ENCODE measurements at regions of chr11 and their contacts with region 1.

Region 1: GRCh38 chr11:8263769-8264410 is at the start of gene LMO1:
- DNase-seq: peak; percentile 84
- H3K4me3 Mint-ChIP-seq: peak within 1 kb of the TSS; percentile 26
- H3K27ac Mint-ChIP-seq: peak within 1 kb of the TSS; percentile 9
- H3K4me1 Mint-ChIP-seq: peaks cover 17% of the 10 kb centered on the region
- H3K27me3 Mint-ChIP-seq: peaks cover 100% of the 10 kb centered on the region

Region 2: GRCh38 chr11:8192016-8192895 is 71.6 kb before region 1 on chr11:
- CTCF ChIA-PET with region 1: interaction called, 18 read pairs
- DNase-seq: peak; percentile 58
- H3K4me3 Mint-ChIP-seq: no peak overlapping the region
- H3K27ac Mint-ChIP-seq: no peak overlapping the region
- H3K4me1 Mint-ChIP-seq: no peaks in the 10 kb centered on the region
- H3K27me3 Mint-ChIP-seq: peaks cover 26% of the 10 kb centered on the region

Region 3: GRCh38 chr11:8209208-8209807 is 54.6 kb before region 1 on chr11:
- CTCF ChIA-PET with region 1: no interaction called
- DNase-seq: peak; percentile 43
- H3K4me3 Mint-ChIP-seq: no peak overlapping the region
- H3K27ac Mint-ChIP-seq: no peak overlapping the region
- H3K4me1 Mint-ChIP-seq: no peaks in the 10 kb centered on the region
- H3K27me3 Mint-ChIP-seq: peaks cover 49% of the 10 kb centered on the region

Region 4: DNA sequence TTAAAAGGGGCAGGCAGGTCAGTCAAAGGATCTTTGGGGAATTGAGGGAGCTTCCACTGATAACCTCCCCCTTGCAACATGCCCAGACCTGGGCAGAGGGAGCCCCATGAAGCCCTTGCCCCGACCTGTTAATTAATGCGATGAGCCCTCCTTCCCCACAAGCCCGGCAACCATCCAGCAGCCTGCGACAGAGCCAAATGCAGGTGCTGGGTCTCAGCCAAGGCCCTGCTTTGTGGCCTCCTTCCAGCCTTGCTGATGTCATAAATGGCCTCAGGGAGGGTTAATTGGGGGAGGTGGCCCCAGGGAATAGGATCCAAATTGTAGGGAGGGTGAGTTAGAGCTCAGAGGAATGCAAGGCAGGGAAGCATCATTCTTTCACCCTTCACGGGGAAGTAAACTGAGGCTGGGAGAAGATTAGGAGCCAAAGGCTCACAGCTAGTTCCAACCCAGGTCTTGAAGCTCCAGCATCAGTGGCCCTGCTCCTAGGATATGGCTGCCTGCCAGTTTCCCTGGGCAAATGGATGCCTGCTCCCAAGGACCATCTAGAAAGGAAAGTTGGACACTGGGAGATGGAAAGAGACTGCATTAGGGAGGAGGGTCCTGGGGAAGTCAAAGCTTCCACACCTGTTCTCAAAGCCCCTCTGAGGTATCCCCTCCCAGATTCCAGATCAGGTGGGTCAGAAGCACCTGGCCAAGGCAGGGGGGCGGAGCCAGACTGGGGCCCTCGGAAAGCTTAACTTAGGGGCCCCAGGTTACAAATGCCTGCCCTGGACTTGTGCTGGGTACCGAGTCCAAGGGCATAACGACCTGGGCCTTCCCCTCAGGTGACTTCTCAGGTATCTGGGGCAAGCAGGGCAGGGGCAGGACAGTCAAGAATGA is 34.4 kb before region 1 on chr11:
- CTCF ChIA-PET with region 1: interaction called, 29 read pairs
- DNase-seq: no peak
- H3K4me3 Mint-ChIP-seq: no peak overlapping the region
- H3K27ac Mint-ChIP-seq: no peak overlapping the region
- H3K4me1 Mint-ChIP-seq: no peaks in the 10 kb centered on the region
- H3K27me3 Mint-ChIP-seq: peaks cover 13% of the 10 kb centered on the region

Region 5: DNA sequence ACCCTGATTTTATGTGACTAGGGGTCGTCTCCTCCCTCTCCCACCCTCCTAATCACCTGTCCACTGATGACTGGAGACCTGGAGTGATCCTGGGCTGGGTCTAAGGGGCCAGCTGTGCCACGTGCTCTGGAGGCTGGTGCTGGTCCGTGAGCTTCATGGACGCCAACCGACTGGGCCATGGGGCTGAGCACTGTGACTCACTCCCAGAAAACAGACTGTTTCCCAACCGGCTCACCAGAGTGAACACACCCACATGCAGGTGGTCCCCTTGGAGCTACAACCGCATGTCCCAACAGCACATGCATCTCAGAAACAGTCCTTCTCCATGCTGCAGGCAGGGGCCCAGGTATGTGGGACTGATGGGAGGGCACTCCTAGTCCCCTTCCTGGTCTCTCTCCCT is 13.8 kb after region 1 on chr11:
- CTCF ChIA-PET with region 1: interaction called, 19 read pairs
- DNase-seq: no peak
- H3K4me3 Mint-ChIP-seq: no peak overlapping the region
- H3K27ac Mint-ChIP-seq: no peak overlapping the region
- H3K4me1 Mint-ChIP-seq: no peaks in the 10 kb centered on the region
- H3K27me3 Mint-ChIP-seq: peaks cover 10% of the 10 kb centered on the region

Measured in activated naive CD4-positive, alpha-beta T cell treated with anti-CD3 and anti-CD28 coated beads, Interleukin-2, amount 10 ng/mL, durations not matched to agents 7 days and 5 days (primary cell).